Mucosa of descending colon (tissue), 3 donors: ENCODE measurements at regions of chr10 and their contacts with region 1.

Region 1: DNA sequence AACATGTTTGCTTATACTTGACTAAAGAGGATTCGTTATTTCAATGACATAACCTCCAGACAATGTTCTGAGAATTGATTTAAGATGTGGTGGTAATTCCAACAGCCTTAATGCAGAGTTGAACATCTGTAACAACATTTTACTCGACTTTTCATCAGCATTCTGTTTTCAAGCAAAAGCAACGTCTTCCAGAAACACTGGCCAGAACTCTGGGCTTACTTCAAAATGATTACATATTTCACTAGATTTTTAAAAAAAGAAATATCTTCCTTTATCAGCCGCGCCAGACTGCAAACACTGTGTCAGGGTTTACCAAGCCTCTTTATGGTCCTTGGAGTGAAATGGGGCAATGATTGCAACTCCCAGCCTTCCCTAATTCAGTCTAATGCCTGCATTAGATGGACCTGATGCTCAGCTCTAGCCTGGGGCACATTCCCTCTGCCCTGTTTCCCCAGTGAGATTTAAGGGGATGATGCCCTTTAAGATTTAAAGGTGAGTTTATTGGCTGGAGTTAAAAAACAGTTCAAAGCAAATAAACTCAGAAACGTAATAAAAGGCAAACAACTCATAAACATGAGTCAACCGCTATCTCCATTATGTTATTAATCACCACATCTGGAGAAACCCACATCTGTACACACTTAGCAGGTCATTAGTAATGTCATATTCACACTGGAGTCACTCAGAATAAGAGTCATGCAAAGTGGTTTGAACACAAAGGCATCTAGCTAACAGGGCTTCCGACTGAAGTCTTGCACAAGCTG is 663.9 kb downstream of the KCNMA1 start:
- DNase-seq: no peak
- ATAC-seq: no peak
- H3K4me3 ChIP-seq: no peak overlapping the region
- H3K4me1 ChIP-seq: no peaks in the 10 kb centered on the region
- CTCF ChIP-seq: no peak

Region 2: GRCh38 chr10:76558586-76558985 is 415.1 kb before region 1 on chr10:
- intact Hi-C with region 1: loop called in 1 of 2 experiments (anchors 10 kb)
- DNase-seq: peak in 1 of 3 donors; percentile 63
- ATAC-seq: peak; percentile 54
- H3K4me3 ChIP-seq: no peak overlapping the region
- H3K4me1 ChIP-seq: no peaks in the 10 kb centered on the region
- CTCF ChIP-seq: no peak

Region 3: GRCh38 chr10:76717141-76717540 is 256.6 kb before region 1 on chr10:
- intact Hi-C with region 1: no loop called
- DNase-seq: no peak
- ATAC-seq: no peak
- H3K4me3 ChIP-seq: no peak overlapping the region
- H3K4me1 ChIP-seq: no peaks in the 10 kb centered on the region
- CTCF ChIP-seq: no peak